IMR-90 (cell line): ENCODE measurements at regions of chr20 and their contacts with region 1.

Region 1: DNA sequence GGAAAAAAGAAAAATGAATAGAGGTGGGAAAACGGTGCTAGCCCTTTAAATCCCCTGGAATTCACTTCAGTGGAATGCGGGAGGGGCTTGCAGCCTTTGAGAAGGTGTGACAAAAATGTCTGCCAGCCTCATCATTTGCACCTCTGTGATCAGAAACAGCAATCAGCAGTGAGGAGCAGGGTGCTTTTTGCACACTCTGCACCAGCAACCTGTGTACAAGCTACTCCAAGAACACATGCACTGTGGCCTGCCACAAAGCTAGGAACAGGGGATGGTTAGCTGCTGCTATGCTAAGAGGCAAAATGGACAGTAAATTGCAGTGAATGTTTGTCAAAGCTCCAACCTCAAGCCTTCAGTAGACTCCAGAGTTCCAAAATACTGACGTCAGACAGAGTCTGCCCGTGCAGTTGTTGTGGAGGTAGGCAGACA is 29.7 kb downstream of the GINS1 start:
- DNase-seq: peak; percentile 40
- ATAC-seq: peak; percentile 68
- H3K4me3 ChIP-seq: no peak overlapping the region
- H3K27ac ChIP-seq: no peak overlapping the region
- H3K4me1 ChIP-seq: peaks cover 2% of the 10 kb centered on the region; the same call in 1 of the 2 replicates
- H3K27me3 ChIP-seq: no peaks in the 10 kb centered on the region
- CTCF ChIP-seq: no peak
- POLR2A ChIP-seq: no peak
- RAD21 ChIP-seq: no peak

Region 2: GRCh38 chr20:25706793-25707192 is 269.6 kb after region 1 on chr20:
- CTCF ChIA-PET with region 1: no interaction called
- POLR2A ChIA-PET with region 1: no interaction called
- dilution Hi-C with region 1: no loop called
- in situ Hi-C with region 1: no loop called
- intact Hi-C with region 1: no loop called
- DNase-seq: no peak
- ATAC-seq: no peak
- H3K4me3 ChIP-seq: no peak overlapping the region
- H3K27ac ChIP-seq: no peak overlapping the region
- H3K4me1 ChIP-seq: no peaks in the 10 kb centered on the region
- H3K27me3 ChIP-seq: no peaks in the 10 kb centered on the region
- CTCF ChIP-seq: no peak
- POLR2A ChIP-seq: no peak
- RAD21 ChIP-seq: no peak

Region 3: GRCh38 chr20:25865380-25866118 is 428.4 kb after region 1 on chr20:
- CTCF ChIA-PET with region 1: no interaction called
- POLR2A ChIA-PET with region 1: no interaction called
- dilution Hi-C with region 1: no loop called
- in situ Hi-C with region 1: loop called (anchors 25 kb)
- intact Hi-C with region 1: no loop called
- DNase-seq: peak; percentile 41
- ATAC-seq: peak; percentile 52; the same call in 1 of the 2 replicates
- H3K4me3 ChIP-seq: no peak overlapping the region
- H3K27ac ChIP-seq: no peak overlapping the region
- H3K4me1 ChIP-seq: no peaks in the 10 kb centered on the region
- H3K27me3 ChIP-seq: peaks cover 18% of the 10 kb centered on the region
- CTCF ChIP-seq: no peak
- POLR2A ChIP-seq: no peak
- RAD21 ChIP-seq: no peak